Activated CD8-positive, alpha-beta T cell treated with anti-CD3 and anti-CD28 coated beads, Interleukin-2, amount 10 ng/mL, durations not matched to agents 7 days and 5 days (primary cell): ENCODE measurements at regions of chr3 and their contacts with region 1.

Region 1: GRCh38 chr3:52693071-52693470 is 7.2 kb downstream of the GNL3 start:
- DNase-seq: no peak
- ATAC-seq: no peak
- H3K4me3 Mint-ChIP-seq: no peak overlapping the region
- H3K27ac Mint-ChIP-seq: peak overlapping the region; percentile 53
- H3K4me1 Mint-ChIP-seq: peaks cover 39% of the 10 kb centered on the region
- H3K27me3 Mint-ChIP-seq: no peaks in the 10 kb centered on the region

Region 2: GRCh38 chr3:53043738-53044137 is 350.7 kb after region 1 on chr3:
- CTCF ChIA-PET with region 1: no interaction called
- POLR2A ChIA-PET with region 1: interaction called, 10 read pairs
- DNase-seq: no peak
- ATAC-seq: no peak
- H3K4me3 Mint-ChIP-seq: peak overlapping the region; percentile 89
- H3K27ac Mint-ChIP-seq: no peak overlapping the region
- H3K4me1 Mint-ChIP-seq: peaks cover 56% of the 10 kb centered on the region
- H3K27me3 Mint-ChIP-seq: peaks cover 5% of the 10 kb centered on the region